Activated naive CD4-positive, alpha-beta T cell treated with anti-CD3 and anti-CD28 coated beads, Interleukin-2, amount 10 ng/mL, durations not matched to agents 7 days and 5 days (primary cell): ENCODE measurements at regions of chr6 and their contacts with region 1.

Region 1: DNA sequence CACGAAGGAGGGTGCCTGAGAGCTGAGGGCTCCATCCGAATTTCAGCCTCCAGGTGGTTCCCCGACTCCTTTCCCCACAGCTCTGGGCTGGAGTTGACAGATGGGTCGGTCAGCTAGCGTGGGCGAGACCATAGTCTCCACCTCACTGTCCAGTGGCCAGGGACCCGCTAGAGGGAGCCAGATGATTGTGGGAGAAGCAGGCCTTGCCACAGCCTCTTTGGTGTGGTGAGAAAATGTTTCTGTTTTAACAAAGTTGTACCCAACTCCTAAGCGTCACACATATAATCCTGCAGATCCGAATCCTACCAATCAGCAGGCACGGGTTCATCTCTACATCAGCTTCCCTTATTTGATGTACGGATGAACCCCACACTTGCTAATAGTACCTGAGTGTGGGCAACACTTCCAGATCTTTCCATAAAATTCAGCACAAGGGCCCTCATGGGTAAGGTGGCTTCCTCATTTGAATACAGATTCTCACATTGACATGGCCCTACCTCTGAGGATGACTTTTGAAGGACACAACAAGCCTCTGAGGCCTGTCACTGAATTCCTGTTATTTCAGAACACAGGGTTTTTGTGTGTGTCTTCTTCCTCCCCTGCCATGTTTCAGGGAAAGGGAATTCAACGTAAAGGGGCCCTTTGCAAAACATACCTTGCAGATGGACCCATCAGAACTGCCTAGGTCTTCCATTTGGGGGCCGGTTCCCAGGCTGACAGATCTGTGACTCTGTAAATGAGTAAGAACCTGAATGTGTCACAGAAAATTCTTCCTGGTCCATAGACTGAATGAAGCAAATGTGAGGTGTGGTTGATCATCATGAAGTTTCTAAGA is 103.2 kb upstream of the DUSP22 start:
- DNase-seq: peak; percentile 92
- H3K4me3 Mint-ChIP-seq: no peak overlapping the region
- H3K27ac Mint-ChIP-seq: peak overlapping the region; percentile 56
- H3K4me1 Mint-ChIP-seq: peaks cover 49% of the 10 kb centered on the region
- H3K27me3 Mint-ChIP-seq: no peaks in the 10 kb centered on the region

Region 2: GRCh38 chr6:217048-217659 is 28.1 kb after region 1 on chr6:
- CTCF ChIA-PET with region 1: interaction called, 77 read pairs
- DNase-seq: peak; percentile 40
- H3K4me3 Mint-ChIP-seq: no peak overlapping the region
- H3K27ac Mint-ChIP-seq: no peak overlapping the region
- H3K4me1 Mint-ChIP-seq: peaks cover 55% of the 10 kb centered on the region
- H3K27me3 Mint-ChIP-seq: peaks cover 3% of the 10 kb centered on the region

Region 3: DNA sequence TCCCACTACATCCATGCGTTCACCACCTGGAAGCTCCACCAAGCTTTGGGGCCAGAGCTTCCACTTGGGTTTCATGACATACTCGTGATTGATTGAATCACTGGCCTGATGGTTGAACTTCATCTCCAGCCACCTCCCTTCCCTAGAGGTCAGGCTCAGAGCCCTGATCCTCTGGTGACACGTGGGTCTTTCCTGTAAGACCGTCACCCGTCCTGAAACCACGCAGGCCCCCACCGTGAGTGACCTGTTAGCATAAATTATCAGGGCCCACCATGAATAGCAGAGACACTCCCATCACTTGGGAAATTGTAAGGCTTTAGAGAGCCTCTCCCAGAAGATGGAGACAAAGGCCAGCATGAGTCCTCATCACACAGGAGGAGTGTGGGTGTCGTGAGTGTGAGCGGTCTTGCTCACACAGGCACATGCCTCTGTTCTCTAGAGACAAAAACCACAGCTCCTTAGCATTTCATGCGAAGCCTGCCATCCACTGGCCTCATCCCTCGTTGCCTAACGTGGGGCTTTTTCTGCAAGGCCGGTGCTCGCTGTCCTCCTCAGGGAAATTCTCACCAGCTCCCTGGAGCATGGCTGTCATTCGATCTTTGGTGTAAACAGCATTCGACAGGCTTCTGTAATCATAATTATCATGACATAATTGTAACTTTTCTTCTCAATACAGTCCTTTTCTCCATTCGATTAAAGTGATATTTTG is 38.2 kb after region 1 on chr6:
- CTCF ChIA-PET with region 1: interaction called, 77 read pairs
- DNase-seq: no peak
- H3K4me3 Mint-ChIP-seq: no peak overlapping the region
- H3K27ac Mint-ChIP-seq: no peak overlapping the region
- H3K4me1 Mint-ChIP-seq: peaks cover 60% of the 10 kb centered on the region
- H3K27me3 Mint-ChIP-seq: peaks cover 3% of the 10 kb centered on the region

Region 4: DNA sequence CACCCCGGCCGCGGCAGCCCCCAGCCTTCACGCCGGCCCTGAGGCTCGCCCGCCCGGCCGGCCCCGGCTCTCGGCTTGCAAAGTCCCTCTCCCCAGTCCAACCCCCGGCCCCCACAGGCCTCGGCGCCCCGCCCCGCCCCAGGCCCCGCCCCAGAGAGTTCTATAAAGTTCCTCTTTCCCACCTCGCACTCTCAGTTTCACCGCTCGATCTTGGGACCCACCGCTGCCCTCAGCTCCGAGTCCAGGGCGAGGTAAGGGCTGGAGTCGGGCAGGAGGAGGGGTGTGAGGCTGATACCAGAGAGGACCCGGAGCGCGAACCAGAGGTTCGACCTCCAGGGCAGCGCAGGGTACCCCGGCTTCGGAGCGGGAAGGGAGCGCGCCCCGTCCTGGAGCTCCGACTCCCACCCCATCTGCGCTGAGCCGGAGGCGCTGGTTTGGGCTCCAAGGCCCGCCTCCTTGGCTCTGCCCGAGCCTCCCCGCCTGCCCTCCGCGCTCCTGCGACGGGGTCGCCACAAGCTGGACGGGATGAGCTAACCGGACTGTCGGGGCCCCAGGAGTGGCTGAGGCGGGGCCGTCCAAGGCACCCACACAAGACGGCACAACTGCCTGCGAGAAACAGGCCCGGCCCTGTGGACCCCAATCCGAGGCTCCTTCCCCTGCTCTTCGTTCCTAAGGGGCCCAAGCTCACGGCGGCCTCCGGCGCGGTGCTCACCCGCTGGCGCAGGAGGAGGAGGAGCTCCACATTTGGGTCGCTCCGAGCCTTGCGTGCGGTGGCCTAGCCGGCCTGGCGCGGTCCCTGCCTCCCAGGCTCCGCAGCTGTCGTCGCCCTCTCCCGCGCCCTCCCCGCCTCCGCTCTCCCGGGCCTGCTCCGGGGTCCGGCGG is 202.8 kb after region 1 on chr6 and contains the start of gene IRF4:
- CTCF ChIA-PET with region 1: interaction called, 43 read pairs
- DNase-seq: peak; percentile 81
- H3K4me3 Mint-ChIP-seq: peak within 1 kb of the TSS; percentile 89
- H3K27ac Mint-ChIP-seq: peak within 1 kb of the TSS; percentile 97
- H3K4me1 Mint-ChIP-seq: peaks cover 54% of the 10 kb centered on the region
- H3K27me3 Mint-ChIP-seq: peaks cover 6% of the 10 kb centered on the region

Region 5: GRCh38 chr6:399785-400534 is 210.9 kb after region 1 on chr6:
- CTCF ChIA-PET with region 1: interaction called, 19 read pairs
- DNase-seq: peak; percentile 77
- H3K4me3 Mint-ChIP-seq: peak overlapping the region; percentile 54
- H3K27ac Mint-ChIP-seq: peak overlapping the region; percentile 92
- H3K4me1 Mint-ChIP-seq: peaks cover 95% of the 10 kb centered on the region
- H3K27me3 Mint-ChIP-seq: no peaks in the 10 kb centered on the region

Region 6: GRCh38 chr6:593139-593906 is 404.3 kb after region 1 on chr6:
- CTCF ChIA-PET with region 1: interaction called, 10 read pairs
- DNase-seq: peak; percentile 78
- H3K4me3 Mint-ChIP-seq: no peak overlapping the region
- H3K27ac Mint-ChIP-seq: no peak overlapping the region
- H3K4me1 Mint-ChIP-seq: peaks cover 13% of the 10 kb centered on the region
- H3K27me3 Mint-ChIP-seq: no peaks in the 10 kb centered on the region

Region 7: DNA sequence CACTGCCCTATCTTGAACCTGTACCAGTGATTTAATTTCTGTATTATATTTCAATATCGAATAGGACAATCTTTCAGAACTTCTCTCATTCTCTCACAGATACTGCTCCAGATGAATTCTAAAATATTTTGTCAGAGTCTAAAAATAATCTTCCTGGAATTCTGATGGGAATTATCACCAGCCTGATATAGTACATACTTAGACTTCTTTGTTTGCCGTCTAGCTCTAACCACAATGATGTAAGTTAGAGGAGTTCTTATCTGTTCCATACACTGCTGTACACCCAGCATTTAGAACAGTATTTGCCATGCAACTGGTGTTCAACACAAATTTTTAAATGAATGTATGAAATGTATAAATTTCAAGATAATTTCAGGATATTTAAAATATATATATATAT is 469.2 kb after region 1 on chr6:
- CTCF ChIA-PET with region 1: no interaction called
- DNase-seq: no peak
- H3K4me3 Mint-ChIP-seq: no peak overlapping the region
- H3K27ac Mint-ChIP-seq: no peak overlapping the region
- H3K4me1 Mint-ChIP-seq: peaks cover 33% of the 10 kb centered on the region
- H3K27me3 Mint-ChIP-seq: no peaks in the 10 kb centered on the region